Calu3 (cell line): ENCODE measurements at regions of chr1 and their contacts with region 1.

Region 1: DNA sequence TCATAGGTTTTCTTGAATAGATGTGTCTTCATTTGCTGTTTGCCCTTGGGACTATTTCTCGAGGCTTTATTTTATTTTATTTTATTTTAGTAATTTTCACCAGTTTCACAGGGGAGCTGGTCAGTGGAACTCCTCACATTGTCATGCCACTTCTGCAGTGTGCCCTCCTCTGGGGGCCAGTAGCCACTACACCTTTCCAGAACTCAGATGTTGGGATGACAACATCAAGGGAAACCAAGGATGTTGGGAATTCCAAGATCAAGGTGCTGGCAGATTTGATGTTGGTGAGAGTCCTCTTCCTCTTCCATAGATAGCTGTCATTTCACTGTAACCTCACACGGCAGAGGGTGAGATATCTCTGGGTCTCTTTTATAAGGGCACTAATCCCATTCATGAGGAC is 35.5 kb downstream of the SLC26A9 start:
- DNase-seq: peak; percentile 69
- H3K4me3 Mint-ChIP-seq: no peak overlapping the region
- H3K27ac Mint-ChIP-seq: no peak overlapping the region
- H3K4me1 Mint-ChIP-seq: no peaks in the 10 kb centered on the region
- H3K27me3 Mint-ChIP-seq: peaks cover 18% of the 10 kb centered on the region
- CTCF ChIP-seq: peak; percentile 90

Region 2: DNA sequence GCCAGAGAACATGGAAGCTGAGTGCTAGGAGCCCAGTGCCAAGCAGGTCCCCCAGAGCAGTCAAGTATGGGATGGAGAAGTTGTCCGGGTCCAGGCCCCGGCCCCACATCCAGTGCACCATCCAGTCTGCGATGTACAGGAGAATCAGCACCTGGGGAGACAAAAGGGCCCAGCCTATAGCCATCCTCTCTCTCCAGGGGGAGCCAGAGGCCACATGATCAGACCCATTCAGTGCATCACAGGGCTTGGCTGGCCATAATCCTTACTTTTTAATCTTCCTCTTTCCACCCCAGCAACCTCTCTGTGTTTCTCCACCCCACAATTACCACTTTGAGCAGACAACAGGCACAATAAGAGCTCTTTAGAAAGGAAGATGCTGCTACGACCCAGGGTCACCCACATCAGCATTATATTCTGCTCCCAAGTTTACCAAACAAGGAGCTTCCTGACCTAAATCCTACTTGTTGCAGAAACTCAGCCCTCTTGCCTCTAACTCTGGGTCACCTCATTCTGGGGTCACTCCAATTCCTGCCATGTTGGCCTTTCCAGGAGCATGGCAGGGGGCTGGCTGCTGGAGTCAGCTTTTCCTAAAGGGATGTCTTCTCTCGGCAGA is 116.1 kb before region 1 on chr1:
- CTCF ChIA-PET with region 1: interaction called, 27 read pairs
- intact Hi-C with region 1: loop called (anchors 1 kb)
- DNase-seq: peak; percentile 81
- H3K4me3 Mint-ChIP-seq: no peak overlapping the region
- H3K27ac Mint-ChIP-seq: no peak overlapping the region
- H3K4me1 Mint-ChIP-seq: no peaks in the 10 kb centered on the region
- H3K27me3 Mint-ChIP-seq: no peaks in the 10 kb centered on the region
- CTCF ChIP-seq: peak; percentile 89

Region 3: GRCh38 chr1:205812878-205813754 is 94.7 kb before region 1 on chr1 and contains the start of gene SLC41A1:
- CTCF ChIA-PET with region 1: interaction called, 4 read pairs
- intact Hi-C with region 1: loop called (anchors 5 kb)
- DNase-seq: peak; percentile 93
- H3K4me3 Mint-ChIP-seq: peak within 1 kb of the TSS; percentile 92
- H3K27ac Mint-ChIP-seq: peak within 1 kb of the TSS; percentile 75
- H3K4me1 Mint-ChIP-seq: peaks cover 30% of the 10 kb centered on the region
- H3K27me3 Mint-ChIP-seq: no peaks in the 10 kb centered on the region
- CTCF ChIP-seq: no peak
- total RNA-seq, gene SLC41A1: 27.8 and 31.9 TPM in 2 replicates

Region 4: GRCh38 chr1:205994346-205994745 is 86.6 kb after region 1 on chr1:
- CTCF ChIA-PET with region 1: no interaction called
- intact Hi-C with region 1: no loop called
- DNase-seq: no peak
- H3K4me3 Mint-ChIP-seq: no peak overlapping the region
- H3K27ac Mint-ChIP-seq: no peak overlapping the region
- H3K4me1 Mint-ChIP-seq: no peaks in the 10 kb centered on the region
- H3K27me3 Mint-ChIP-seq: no peaks in the 10 kb centered on the region
- CTCF ChIP-seq: no peak